ENCODE measurements at regions of chr2 and their contacts with region 1.

Region 1: GRCh38 chr2:667332-667999 is 9.7 kb downstream of the TMEM18 start:
- DNase-seq: peak in 2 of 9 experiments; percentile 30 to 43
- ATAC-seq: peak; percentile 82
- H3K4me3 ChIP-seq: no peak overlapping the region
- H3K4me3 Mint-ChIP-seq: no peak overlapping the region
- H3K27ac ChIP-seq: no peak overlapping the region
- H3K27ac Mint-ChIP-seq: peak overlapping the region; percentile 41
- H3K4me1 ChIP-seq: peaks cover 10% of the 10 kb centered on the region
- H3K4me1 Mint-ChIP-seq: peaks cover 26% of the 10 kb centered on the region
- H3K27me3 ChIP-seq: no peaks in the 10 kb centered on the region
- H3K27me3 Mint-ChIP-seq: no peaks in the 10 kb centered on the region
- CTCF ChIP-seq: peak; percentile 60

Region 2: DNA sequence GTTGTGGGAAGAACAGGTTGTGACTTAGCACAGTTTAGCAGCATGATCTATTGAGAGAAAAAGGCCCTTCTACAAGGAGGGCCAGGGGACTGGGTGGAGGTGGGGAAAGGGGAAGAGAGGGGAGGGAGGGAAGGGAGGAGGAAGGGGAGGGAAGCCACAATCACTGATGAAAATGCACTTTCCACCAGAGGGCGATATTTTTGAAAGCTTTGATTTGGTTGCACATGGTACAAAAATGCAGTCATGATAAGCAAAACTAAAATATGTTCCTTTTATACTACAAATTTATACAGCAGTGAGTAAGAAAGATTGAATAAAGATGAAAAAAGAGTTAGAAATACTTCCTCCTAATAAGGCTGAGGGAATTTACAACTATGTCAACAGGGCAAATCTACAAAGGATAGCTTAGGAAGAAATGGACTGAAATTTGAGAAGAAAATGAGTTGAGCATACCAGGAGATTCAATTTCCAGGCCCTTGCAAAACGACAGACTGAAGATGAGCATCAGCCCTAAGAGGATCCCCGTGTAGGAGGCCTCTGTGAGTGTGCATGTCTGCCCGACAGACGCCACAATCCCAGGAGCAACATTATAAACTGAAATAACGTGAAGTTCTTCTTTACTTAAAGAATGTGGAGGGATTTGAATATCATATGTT is 420.8 kb before region 1 on chr2:
- CTCF ChIA-PET with region 1: no interaction called
- POLR2A ChIA-PET with region 1: no interaction called
- intact Hi-C with region 1: loop called (anchors 1 to 2 kb)
- DNase-seq: peak in 3 of 9 experiments; percentile 32 to 73 (median 63)
- ATAC-seq: peak; percentile 38
- H3K4me3 ChIP-seq: no peak overlapping the region
- H3K4me3 Mint-ChIP-seq: no peak overlapping the region
- H3K27ac ChIP-seq: no peak overlapping the region
- H3K27ac Mint-ChIP-seq: no peak overlapping the region
- H3K4me1 ChIP-seq: peaks cover 3% of the 10 kb centered on the region
- H3K4me1 Mint-ChIP-seq: peaks cover 6% of the 10 kb centered on the region
- H3K27me3 ChIP-seq: no peaks in the 10 kb centered on the region
- H3K27me3 Mint-ChIP-seq: no peaks in the 10 kb centered on the region
- CTCF ChIP-seq: peak; percentile 60

Region 3: GRCh38 chr2:816278-816677 is 148.8 kb after region 1 on chr2:
- CTCF ChIA-PET with region 1: no interaction called
- POLR2A ChIA-PET with region 1: no interaction called
- intact Hi-C with region 1: no loop called
- DNase-seq: no peak
- ATAC-seq: no peak
- H3K4me3 ChIP-seq: no peak overlapping the region
- H3K4me3 Mint-ChIP-seq: no peak overlapping the region
- H3K27ac ChIP-seq: no peak overlapping the region
- H3K27ac Mint-ChIP-seq: no peak overlapping the region
- H3K4me1 ChIP-seq: no peaks in the 10 kb centered on the region
- H3K4me1 Mint-ChIP-seq: no peaks in the 10 kb centered on the region
- H3K27me3 ChIP-seq: no peaks in the 10 kb centered on the region
- H3K27me3 Mint-ChIP-seq: peaks cover 5% of the 10 kb centered on the region
- CTCF ChIP-seq: no peak